PC-9 (cell line): ENCODE measurements at regions of chr14 and their contacts with region 1.

Region 1: DNA sequence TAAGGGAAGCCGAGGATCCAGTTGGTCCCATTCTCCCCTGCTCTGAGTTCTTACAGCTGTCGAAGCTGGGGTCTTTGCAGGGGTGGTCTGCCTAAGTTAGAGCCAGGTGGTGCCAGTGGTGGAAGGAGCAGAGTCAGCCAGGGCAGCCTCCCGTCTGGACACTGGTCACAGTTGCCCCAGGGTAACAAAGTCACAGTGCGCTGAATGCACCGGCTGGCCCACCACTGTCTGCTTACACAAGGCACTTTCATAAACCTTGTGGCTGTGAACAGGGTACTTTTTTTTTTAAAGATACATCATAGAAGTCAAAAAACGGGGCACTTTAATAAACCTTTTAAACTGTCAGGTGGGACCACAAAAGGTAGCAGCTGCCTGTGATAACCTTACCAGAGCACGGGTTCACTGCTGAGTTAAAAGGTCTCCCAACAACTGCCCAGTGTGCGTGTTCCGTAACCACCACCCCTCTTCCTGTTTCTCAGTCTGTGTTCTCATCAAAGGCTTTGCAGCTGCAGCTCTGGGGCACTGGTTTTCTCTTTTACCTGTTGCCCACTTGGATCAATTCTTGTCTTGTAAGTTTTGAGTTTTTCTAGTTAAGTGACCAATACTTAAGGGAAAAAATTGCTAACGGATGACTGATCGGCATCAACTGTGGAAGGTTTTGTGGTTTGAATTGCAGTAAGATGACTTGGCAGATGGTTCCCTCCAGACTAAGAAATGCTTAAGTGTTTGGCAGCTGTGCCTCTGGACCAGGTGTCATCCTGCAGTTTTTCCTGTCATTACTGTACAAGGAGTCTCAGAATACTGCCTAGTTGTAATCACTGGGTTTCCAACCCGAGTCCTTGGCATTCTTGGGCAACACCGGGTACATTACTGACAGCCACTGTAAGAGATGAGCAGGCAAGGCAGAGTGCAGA is 55.9 kb downstream of the DYNC1H1 start:
- DNase-seq: peak; percentile 49 to 99
- H3K4me3 ChIP-seq: no peak overlapping the region
- H3K27ac ChIP-seq: peak overlapping the region; percentile 63
- H3K4me1 ChIP-seq: peaks cover 30% of the 10 kb centered on the region
- H3K27me3 ChIP-seq: no peaks in the 10 kb centered on the region
- CTCF ChIP-seq: no peak

Region 2: DNA sequence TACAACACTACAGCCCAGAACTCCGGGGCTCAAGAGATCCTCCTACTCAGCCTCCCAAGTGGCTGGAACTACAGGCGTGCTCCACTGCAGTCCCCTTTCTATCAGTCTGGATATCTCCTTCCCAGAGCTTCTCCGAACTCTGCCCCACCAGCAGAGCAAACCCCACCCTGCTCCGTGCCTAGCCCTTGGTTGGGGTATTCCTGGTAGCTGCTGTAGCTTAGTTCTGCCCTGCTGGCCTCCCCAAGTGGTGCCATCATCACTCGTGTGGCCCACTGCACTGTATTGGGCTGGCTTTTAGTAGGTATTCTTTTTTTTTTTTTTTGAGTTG is 57.0 kb after region 1 on chr14:
- CTCF ChIA-PET with region 1: no interaction called
- POLR2A ChIA-PET with region 1: no interaction called
- intact Hi-C with region 1: loop called (anchors 2 kb)
- DNase-seq: no peak
- H3K4me3 ChIP-seq: no peak overlapping the region
- H3K27ac ChIP-seq: peak overlapping the region; percentile 5; the same call in 1 of the 2 replicates
- H3K4me1 ChIP-seq: peaks cover 25% of the 10 kb centered on the region
- H3K27me3 ChIP-seq: no peaks in the 10 kb centered on the region
- CTCF ChIP-seq: no peak

Region 3: GRCh38 chr14:102103062-102103695 is 82.9 kb after region 1 on chr14:
- CTCF ChIA-PET with region 1: no interaction called
- POLR2A ChIA-PET with region 1: interaction called, 10 read pairs
- intact Hi-C with region 1: no loop called
- DNase-seq: no peak
- H3K4me3 ChIP-seq: no peak overlapping the region
- H3K27ac ChIP-seq: no peak overlapping the region
- H3K4me1 ChIP-seq: peaks cover 12% of the 10 kb centered on the region
- H3K27me3 ChIP-seq: no peaks in the 10 kb centered on the region
- CTCF ChIP-seq: no peak